SK-N-SH (cell line): ENCODE measurements at regions of chr2 and their contacts with region 1.

Region 1: DNA sequence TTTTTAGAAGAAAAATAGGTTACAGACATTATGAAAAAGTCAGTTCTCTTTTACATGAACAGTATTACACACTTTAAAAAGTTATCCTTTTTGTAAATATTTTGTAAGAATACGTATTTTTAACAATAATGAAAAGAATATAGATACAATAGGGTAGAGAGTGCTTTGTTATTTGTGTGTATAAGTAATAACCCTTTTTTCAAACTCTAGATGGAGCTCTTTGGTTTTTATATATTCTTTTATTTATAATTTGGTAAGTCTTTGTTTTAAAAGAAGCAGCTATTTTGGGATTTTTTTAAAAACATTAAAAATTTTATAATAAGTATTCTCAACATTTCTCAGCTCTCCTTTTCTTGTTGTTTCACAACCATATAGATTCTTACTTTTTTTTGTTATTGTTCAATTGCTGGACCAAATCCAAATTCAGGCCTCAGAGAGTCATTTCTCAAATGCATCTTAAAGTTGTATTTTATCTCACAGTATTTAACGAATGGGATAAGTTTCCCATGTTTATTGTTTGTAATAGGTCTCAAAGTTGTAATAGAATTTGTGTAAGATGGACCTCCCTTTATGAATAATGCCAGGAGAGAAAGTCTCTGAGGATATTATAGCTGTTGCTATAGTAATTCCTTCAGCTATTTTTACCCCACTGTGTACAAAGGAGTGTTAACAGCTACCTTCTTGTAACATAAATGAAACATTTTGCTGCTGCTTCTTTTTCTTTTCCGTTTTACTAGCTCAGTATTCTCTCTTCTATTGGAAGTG is 46.4 kb downstream of the ACYP2 start:
- DNase-seq: no peak
- H3K4me3 ChIP-seq: no peak overlapping the region
- H3K27ac ChIP-seq: no peak overlapping the region
- H3K4me1 ChIP-seq: peaks cover 0 to 2% of the 10 kb centered on the region in 2 experiments; a peak in 2 of 4 replicates
- H3K27me3 ChIP-seq: no peaks in the 10 kb centered on the region
- CTCF ChIP-seq: peak; percentile 52
- EP300 ChIP-seq: no peak
- RAD21 ChIP-seq: no peak

Region 2: DNA sequence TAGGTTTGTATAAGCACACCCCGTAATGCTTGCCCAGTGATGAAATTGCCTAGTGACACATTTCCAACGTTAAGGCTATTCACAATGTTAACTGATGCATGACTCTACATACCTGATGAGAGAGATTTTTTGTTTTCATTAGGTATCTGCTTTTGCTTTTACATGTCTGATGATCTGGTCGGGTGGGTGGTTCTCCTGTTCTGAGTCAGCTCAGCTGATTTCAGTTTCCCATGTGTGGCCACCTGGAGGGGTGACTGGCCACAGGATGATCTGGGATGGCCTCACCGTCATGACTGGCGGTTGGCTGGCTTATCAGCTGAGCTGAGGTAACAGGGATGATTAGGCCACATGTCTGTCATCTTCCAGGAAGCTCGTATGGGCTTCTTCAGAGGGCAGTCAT is 80.3 kb before region 1 on chr2:
- CTCF ChIA-PET with region 1: no interaction called
- POLR2A ChIA-PET with region 1: no interaction called
- DNase-seq: no peak
- H3K4me3 ChIP-seq: no peak overlapping the region
- H3K27ac ChIP-seq: no peak overlapping the region
- H3K4me1 ChIP-seq: no peaks in the 10 kb centered on the region
- H3K27me3 ChIP-seq: no peaks in the 10 kb centered on the region
- CTCF ChIP-seq: no peak
- EP300 ChIP-seq: no peak
- RAD21 ChIP-seq: no peak

Region 3: DNA sequence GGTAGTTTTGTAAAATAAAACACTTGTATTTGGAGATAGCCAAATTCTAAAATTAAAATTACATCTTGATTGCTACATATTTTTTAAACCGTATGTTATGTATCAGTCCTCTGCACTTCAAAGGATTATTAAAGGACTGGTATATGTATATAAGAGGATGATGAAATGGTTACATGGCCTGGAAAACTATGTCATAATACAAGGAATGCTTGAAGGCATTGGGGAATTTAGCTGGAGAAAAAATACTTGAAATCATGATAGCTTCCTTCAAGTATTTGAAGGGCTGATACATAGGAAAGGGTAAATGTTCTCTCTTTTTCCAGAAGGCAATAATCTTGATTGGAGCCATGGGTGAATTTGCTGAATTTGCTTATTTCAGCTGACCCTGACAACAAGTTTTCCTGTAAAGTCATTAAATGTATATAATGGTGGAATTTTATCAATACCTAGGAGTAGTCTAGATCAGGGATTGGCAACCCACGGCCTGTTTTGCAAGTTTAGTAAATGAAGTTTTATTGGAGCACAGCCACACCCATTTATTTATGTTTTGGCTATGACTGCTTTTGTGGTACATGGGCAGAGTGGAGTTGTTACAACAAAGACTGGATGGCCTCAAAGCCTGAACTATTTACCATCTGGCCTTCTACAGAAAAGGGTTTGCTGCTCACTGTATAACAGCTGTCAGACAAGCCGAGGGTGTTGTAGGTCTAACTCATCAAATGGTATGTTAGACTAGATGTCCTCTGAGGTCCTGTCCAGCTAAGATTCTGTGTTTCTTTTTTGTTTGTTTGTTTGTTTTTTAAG is 12.0 kb before region 1 on chr2:
- CTCF ChIA-PET with region 1: interaction called, 13 read pairs
- POLR2A ChIA-PET with region 1: no interaction called
- DNase-seq: no peak
- H3K4me3 ChIP-seq: no peak overlapping the region
- H3K27ac ChIP-seq: no peak overlapping the region
- H3K4me1 ChIP-seq: peaks cover 0 to 2% of the 10 kb centered on the region in 2 experiments; a peak in 1 of 4 replicates
- H3K27me3 ChIP-seq: no peaks in the 10 kb centered on the region
- CTCF ChIP-seq: no peak
- EP300 ChIP-seq: no peak
- RAD21 ChIP-seq: no peak

Region 4: GRCh38 chr2:54176577-54176976 is 14.7 kb after region 1 on chr2:
- CTCF ChIA-PET with region 1: interaction called, 12 read pairs
- POLR2A ChIA-PET with region 1: no interaction called
- DNase-seq: peak; percentile 38
- H3K4me3 ChIP-seq: no peak overlapping the region
- H3K27ac ChIP-seq: no peak overlapping the region
- H3K4me1 ChIP-seq: no peaks in the 10 kb centered on the region
- H3K27me3 ChIP-seq: no peaks in the 10 kb centered on the region
- CTCF ChIP-seq: peak; percentile 63
- EP300 ChIP-seq: no peak
- RAD21 ChIP-seq: peak; percentile 80